IMR-90 (cell line): ENCODE measurements at regions of chr6 and their contacts with region 1.

Region 1: GRCh38 chr6:146295695-146296094 is 247.9 kb upstream of the RAB32 start:
- DNase-seq: no peak
- ATAC-seq: no peak
- H3K4me3 ChIP-seq: no peak overlapping the region
- H3K27ac ChIP-seq: no peak overlapping the region
- H3K4me1 ChIP-seq: no peaks in the 10 kb centered on the region
- H3K27me3 ChIP-seq: no peaks in the 10 kb centered on the region
- CTCF ChIP-seq: no peak
- POLR2A ChIP-seq: no peak
- RAD21 ChIP-seq: no peak

Region 2: DNA sequence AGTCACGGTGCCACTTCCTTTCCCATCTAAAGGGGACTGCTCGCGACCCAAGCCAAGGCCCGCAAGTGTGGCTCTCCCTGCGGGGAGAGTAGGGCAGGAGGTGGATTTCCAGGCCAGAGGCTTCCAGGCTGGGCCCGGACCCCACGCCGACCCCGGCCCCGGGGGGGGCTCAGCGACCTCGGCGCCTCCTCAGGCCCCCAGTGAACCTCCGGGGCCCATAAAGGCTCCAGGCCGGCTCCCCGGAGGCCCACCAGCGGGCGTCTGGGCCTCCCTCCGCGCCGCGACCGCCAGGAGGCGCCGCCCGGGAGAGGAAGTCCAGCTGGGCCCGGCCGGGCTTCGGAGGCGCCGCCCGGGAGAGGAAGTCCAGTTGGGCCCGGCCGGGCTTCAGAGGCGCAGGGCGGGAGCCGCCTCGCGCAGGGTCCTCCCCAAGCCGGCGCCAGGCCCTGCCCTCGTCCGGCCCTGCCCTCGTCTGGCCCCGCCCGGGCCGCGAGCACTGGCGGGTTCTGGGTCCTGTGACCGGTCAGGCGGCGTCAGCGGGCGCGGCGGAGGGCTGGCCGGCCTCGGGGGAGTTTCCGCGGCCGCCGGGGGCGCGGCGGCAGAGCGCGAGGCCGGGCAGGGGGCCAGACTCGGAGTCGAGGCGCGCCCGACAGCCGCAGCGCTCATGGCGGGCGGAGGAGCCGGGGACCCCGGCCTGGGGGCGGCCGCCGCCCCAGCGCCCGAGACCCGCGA is 247.7 kb after region 1 on chr6 and contains the start of gene RAB32:
- CTCF ChIA-PET with region 1: no interaction called
- POLR2A ChIA-PET with region 1: no interaction called
- dilution Hi-C with region 1: no loop called
- in situ Hi-C with region 1: no loop called
- intact Hi-C with region 1: no loop called
- DNase-seq: peak; percentile 95
- ATAC-seq: peak; percentile 96
- H3K4me3 ChIP-seq: peak within 1 kb of the TSS; percentile 76
- H3K27ac ChIP-seq: peak within 1 kb of the TSS; percentile 89
- H3K4me1 ChIP-seq: peaks cover 4% of the 10 kb centered on the region; the same call in 1 of the 2 replicates
- H3K27me3 ChIP-seq: no peaks in the 10 kb centered on the region
- CTCF ChIP-seq: peak; percentile 69
- POLR2A ChIP-seq: peak; percentile 70
- RAD21 ChIP-seq: peak; percentile 53
- total RNA-seq, gene RAB32: 104 and 108 TPM in 2 replicates

Region 3: GRCh38 chr6:148223424-148223842 is 1927.7 kb after region 1 on chr6:
- CTCF ChIA-PET with region 1: no interaction called
- POLR2A ChIA-PET with region 1: interaction called, 11 read pairs
- dilution Hi-C with region 1: no loop called
- in situ Hi-C with region 1: no loop called
- intact Hi-C with region 1: no loop called
- DNase-seq: peak; percentile 80
- ATAC-seq: peak; percentile 66
- H3K4me3 ChIP-seq: no peak overlapping the region
- H3K27ac ChIP-seq: peak overlapping the region; percentile 30; the same call in 1 of the 2 replicates
- H3K4me1 ChIP-seq: peaks cover 11% of the 10 kb centered on the region
- H3K27me3 ChIP-seq: no peaks in the 10 kb centered on the region
- CTCF ChIP-seq: no peak
- POLR2A ChIP-seq: no peak
- RAD21 ChIP-seq: no peak